ENCODE measurements at regions of chr2 and their contacts with region 1.

Region 1: GRCh38 chr2:239267288-239267951 is 133.4 kb downstream of the HDAC4 start:
- DNase-seq: peak; percentile 92
- H3K4me3 Mint-ChIP-seq: peak overlapping the region; percentile 84
- H3K27ac Mint-ChIP-seq: peak overlapping the region; percentile 89
- H3K4me1 Mint-ChIP-seq: peaks cover 83% of the 10 kb centered on the region
- H3K27me3 Mint-ChIP-seq: peaks cover 7% of the 10 kb centered on the region

Region 2: GRCh38 chr2:238438856-238439849 is 828.3 kb before region 1 on chr2:
- intact Hi-C with region 1: loop called (anchors 5 kb)
- DNase-seq: no peak
- H3K4me3 Mint-ChIP-seq: peak overlapping the region; percentile 9
- H3K27ac Mint-ChIP-seq: peak overlapping the region; percentile 71
- H3K4me1 Mint-ChIP-seq: peaks cover 46% of the 10 kb centered on the region
- H3K27me3 Mint-ChIP-seq: no peaks in the 10 kb centered on the region

Region 3: GRCh38 chr2:239143858-239144718 is 123.3 kb before region 1 on chr2:
- intact Hi-C with region 1: loop called (anchors 1 kb)
- DNase-seq: no peak
- H3K4me3 Mint-ChIP-seq: no peak overlapping the region
- H3K27ac Mint-ChIP-seq: no peak overlapping the region
- H3K4me1 Mint-ChIP-seq: peaks cover 7% of the 10 kb centered on the region
- H3K27me3 Mint-ChIP-seq: no peaks in the 10 kb centered on the region

Region 4: DNA sequence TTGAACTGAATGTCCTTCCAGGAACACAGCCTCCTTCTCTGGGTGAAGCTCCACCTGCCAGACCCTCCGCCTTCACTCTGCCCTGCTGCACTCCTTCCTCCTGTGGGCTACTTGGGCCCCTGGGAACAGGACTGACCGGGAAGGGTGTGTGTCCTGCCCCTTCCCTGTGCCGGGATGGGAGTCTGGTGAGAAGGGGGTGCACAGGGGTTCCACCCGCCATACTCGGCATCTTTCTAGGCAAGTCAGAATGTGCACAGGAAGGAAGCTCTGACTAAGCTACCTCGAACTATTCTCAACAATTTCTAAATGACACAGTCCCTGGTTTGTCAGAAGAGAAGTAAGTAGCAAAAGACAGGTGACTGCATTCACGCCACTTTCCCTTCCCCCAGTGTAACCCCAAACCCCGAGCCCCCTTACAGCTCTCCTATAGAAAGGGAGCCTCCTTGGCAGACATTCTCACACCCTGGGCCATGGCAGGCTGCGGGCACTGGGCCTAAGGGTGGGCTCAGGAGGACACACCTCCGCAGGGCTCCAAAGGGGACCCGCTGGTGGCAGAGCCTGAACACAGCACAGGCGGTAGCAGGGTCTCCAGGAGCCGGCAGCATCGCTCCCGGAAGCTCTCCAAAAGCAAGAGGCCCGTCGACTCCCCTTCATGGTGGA is 50.7 kb before region 1 on chr2:
- intact Hi-C with region 1: loop called (anchors 1 kb)
- DNase-seq: peak; percentile 34
- H3K4me3 Mint-ChIP-seq: peak overlapping the region; percentile 76
- H3K27ac Mint-ChIP-seq: peak overlapping the region; percentile 69
- H3K4me1 Mint-ChIP-seq: peaks cover 51% of the 10 kb centered on the region
- H3K27me3 Mint-ChIP-seq: no peaks in the 10 kb centered on the region

Region 5: GRCh38 chr2:239298116-239298804 is 30.8 kb after region 1 on chr2:
- intact Hi-C with region 1: loop called (anchors 1 kb)
- DNase-seq: peak; percentile 72
- H3K4me3 Mint-ChIP-seq: peak overlapping the region; percentile 84
- H3K27ac Mint-ChIP-seq: peak overlapping the region; percentile 91
- H3K4me1 Mint-ChIP-seq: peaks cover 71% of the 10 kb centered on the region
- H3K27me3 Mint-ChIP-seq: peaks cover 2% of the 10 kb centered on the region

Region 6: GRCh38 chr2:239380831-239381708 is 113.7 kb after region 1 on chr2:
- intact Hi-C with region 1: loop called (anchors 1 kb)
- DNase-seq: peak; percentile 64
- H3K4me3 Mint-ChIP-seq: peak overlapping the region; percentile 83
- H3K27ac Mint-ChIP-seq: peak overlapping the region; percentile 94
- H3K4me1 Mint-ChIP-seq: peaks cover 38% of the 10 kb centered on the region
- H3K27me3 Mint-ChIP-seq: peaks cover 2% of the 10 kb centered on the region

Region 7: DNA sequence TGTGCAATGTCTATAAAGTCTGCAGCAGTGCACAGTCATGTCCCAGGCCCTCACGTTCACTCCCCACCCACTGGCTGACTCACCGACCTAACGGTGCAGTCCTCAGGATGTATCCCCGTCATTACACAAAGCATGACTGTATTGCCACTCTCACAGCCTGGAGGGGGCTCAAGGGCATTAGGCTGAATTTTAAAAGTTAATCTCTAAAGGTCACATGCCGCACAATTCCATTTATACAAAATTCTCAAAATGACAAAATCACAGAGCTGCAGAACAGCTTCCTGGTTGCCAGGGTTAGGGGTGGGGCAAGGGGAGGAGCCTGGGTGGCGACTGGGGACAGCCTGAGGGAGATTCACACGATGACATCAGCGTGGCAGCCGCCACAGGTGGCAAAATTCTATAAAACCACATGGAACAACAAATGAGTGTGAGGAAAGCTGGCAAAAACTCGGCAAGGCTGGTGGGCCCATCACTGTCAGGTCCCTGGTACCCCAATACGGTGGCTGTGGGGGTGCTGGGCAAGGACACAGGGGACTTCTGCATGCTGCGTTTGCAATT is 660.1 kb after region 1 on chr2:
- intact Hi-C with region 1: loop called (anchors 10 kb)
- DNase-seq: peak; percentile 48
- H3K4me3 Mint-ChIP-seq: peak overlapping the region; percentile 53
- H3K27ac Mint-ChIP-seq: peak overlapping the region; percentile 61
- H3K4me1 Mint-ChIP-seq: peaks cover 38% of the 10 kb centered on the region
- H3K27me3 Mint-ChIP-seq: peaks cover 11% of the 10 kb centered on the region